ENCODE measurements at regions of chr20 and their contacts with region 1.

Region 1: GRCh38 chr20:23106261-23106851 is 20.2 kb upstream of the CD93 start:
- DNase-seq: peak; percentile 93
- H3K4me3 ChIP-seq: no peak overlapping the region
- H3K27ac ChIP-seq: peak overlapping the region; percentile 70
- H3K4me1 ChIP-seq: peaks cover 52% of the 10 kb centered on the region
- H3K27me3 ChIP-seq: no peaks in the 10 kb centered on the region
- CTCF ChIP-seq: peak; percentile 27 to 39
- POLR2A ChIP-seq: peak; percentile 17

Region 2: DNA sequence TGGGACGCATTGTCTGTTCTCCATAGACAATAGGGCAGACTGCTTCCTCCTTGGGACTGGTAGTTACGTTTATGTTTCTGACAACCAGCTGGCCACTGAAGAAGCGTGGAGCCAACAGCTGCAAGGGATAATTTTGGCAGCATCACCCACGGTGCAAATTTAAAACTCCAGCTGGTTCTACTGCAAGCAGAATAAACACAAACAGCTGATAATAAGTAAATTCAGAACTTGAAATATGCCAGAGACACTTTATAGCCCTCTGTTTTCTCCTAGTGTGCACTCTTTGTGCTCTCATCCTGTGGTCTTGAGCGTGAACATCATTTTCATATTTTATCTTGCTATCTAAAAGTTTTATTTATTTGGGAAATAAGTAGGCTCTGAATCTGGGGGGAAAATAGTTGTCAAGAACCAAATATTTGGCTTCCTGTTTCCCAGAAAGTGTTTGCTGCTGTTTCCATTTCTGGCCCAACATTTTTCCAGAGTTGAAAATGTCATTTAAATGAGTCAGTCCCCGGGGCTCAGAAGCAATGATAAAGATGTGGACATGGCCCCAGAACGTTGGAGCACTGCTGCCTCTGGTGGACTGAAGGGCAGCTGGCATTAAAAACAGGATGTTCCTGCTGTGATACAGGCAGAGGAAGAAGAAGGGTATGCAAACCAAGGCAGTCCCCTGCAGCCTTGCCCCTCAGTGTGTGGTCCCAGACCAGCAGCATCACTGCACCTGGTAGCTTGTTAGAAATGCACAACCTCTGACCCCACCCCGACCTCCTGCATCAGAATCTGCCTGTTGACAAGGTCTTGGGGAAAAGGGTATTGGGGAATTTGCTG is 44.4 kb before region 1 on chr20:
- CTCF ChIA-PET with region 1: interaction called, 5 read pairs
- POLR2A ChIA-PET with region 1: no interaction called
- dilution Hi-C with region 1: no loop called
- intact Hi-C with region 1: loop called (anchors 1 kb)
- DNase-seq: peak; percentile 92
- H3K4me3 ChIP-seq: no peak overlapping the region
- H3K27ac ChIP-seq: peak overlapping the region; percentile 74
- H3K4me1 ChIP-seq: peaks cover 29% of the 10 kb centered on the region
- H3K27me3 ChIP-seq: no peaks in the 10 kb centered on the region
- CTCF ChIP-seq: peak; percentile 57 to 69
- POLR2A ChIP-seq: no peak

Region 3: DNA sequence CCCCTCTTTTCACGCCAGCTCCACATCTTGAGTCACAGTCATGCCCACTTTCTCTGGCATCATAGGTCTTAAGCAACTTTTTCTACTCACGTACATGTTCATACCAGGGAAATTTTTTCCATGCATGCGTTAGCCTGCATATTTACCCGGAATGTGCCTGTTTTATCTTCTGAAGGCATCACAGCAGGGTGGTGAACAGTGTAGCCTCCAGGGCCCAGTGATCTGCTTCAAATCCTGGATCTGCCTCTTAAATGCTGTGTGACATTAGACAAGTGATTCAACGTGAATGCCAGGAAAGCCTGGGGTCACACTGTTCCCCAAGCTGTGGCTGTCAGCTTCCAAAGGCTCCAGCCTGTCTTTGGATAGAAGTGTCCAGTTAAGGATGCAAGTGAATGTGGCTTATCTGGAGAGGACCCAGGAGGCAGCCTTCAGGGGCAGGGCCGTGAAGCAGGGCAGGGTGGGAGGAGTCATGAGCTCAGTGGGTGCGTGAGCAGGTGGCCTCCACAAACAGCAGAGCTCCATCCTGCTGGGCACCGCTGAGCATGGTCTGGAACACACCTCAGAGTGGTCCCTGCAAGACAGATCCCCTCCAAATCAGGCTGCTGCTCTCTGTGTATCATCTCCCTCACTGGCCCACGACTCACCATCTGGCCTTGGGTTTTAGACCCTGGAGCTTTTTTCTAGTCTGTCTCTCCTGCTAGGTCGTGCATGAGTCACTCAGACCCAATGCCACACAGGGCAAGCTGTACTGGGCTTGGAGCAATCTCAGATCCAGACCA is 10.1 kb after region 1 on chr20:
- CTCF ChIA-PET with region 1: interaction called, 10 read pairs
- POLR2A ChIA-PET with region 1: interaction called, 4 read pairs
- dilution Hi-C with region 1: no loop called
- intact Hi-C with region 1: no loop called
- DNase-seq: no peak
- H3K4me3 ChIP-seq: no peak overlapping the region
- H3K27ac ChIP-seq: no peak overlapping the region
- H3K4me1 ChIP-seq: peaks cover 8% of the 10 kb centered on the region
- H3K27me3 ChIP-seq: no peaks in the 10 kb centered on the region
- CTCF ChIP-seq: no peak
- POLR2A ChIP-seq: no peak

Region 4: DNA sequence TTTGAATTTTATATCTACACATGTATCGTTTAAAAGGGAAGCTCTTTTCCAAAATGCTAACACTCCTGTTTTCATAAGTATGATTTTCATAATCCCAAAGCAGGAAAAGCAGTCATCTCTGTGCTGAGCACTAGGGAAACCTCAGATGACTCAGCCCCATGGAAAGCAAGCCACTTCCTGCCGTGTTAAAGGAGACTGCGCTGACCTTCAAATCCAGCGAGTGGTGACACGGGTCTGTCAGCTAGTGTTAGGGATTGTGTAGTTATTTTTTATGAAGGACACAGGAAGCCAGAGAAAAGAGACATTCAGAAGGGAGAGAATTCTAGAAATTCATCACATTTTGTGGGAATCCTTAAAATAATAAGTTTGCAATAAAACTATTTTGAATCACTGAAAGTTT is 36.7 kb after region 1 on chr20:
- CTCF ChIA-PET with region 1: interaction called, 26 read pairs
- POLR2A ChIA-PET with region 1: interaction called, 3 read pairs
- dilution Hi-C with region 1: no loop called
- intact Hi-C with region 1: loop called (anchors 1 kb)
- DNase-seq: peak; percentile 94
- H3K4me3 ChIP-seq: no peak overlapping the region
- H3K27ac ChIP-seq: peak overlapping the region; percentile 88
- H3K4me1 ChIP-seq: peaks cover 77% of the 10 kb centered on the region
- H3K27me3 ChIP-seq: no peaks in the 10 kb centered on the region
- CTCF ChIP-seq: no peak
- POLR2A ChIP-seq: no peak

Region 5: DNA sequence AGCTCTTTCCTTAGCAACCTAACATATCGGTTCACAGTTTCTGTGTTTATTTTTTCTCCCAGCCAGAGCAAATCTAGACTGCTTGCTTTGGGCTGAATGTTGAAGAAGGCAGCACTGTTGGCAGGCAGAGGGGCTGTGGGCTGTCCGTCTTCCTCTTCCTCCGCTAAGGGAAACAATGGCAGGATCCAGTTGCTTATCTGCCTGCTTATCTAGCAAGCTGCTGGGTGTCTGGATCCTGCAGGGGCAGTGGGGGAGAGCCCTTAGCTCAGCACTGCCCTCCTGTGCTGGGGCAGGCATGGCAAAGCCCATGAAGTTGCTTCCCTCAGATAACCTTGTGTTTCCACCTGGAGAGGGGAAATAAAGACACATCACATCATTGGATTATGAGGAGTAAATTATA is 72.5 kb after region 1 on chr20:
- CTCF ChIA-PET with region 1: interaction called, 19 read pairs
- POLR2A ChIA-PET with region 1: no interaction called
- dilution Hi-C with region 1: no loop called
- intact Hi-C with region 1: loop called (anchors 1 kb)
- DNase-seq: peak; percentile 96
- H3K4me3 ChIP-seq: no peak overlapping the region
- H3K27ac ChIP-seq: peak overlapping the region; percentile 56
- H3K4me1 ChIP-seq: peaks cover 21% of the 10 kb centered on the region
- H3K27me3 ChIP-seq: peaks cover 0 to 2% of the 10 kb centered on the region in 2 experiments
- CTCF ChIP-seq: peak; percentile 43 to 80
- POLR2A ChIP-seq: peak; percentile 49